Posterior cingulate gyrus (tissue), 11 donors: ENCODE measurements at regions of chr9 and their contacts with region 1.

Region 1: DNA sequence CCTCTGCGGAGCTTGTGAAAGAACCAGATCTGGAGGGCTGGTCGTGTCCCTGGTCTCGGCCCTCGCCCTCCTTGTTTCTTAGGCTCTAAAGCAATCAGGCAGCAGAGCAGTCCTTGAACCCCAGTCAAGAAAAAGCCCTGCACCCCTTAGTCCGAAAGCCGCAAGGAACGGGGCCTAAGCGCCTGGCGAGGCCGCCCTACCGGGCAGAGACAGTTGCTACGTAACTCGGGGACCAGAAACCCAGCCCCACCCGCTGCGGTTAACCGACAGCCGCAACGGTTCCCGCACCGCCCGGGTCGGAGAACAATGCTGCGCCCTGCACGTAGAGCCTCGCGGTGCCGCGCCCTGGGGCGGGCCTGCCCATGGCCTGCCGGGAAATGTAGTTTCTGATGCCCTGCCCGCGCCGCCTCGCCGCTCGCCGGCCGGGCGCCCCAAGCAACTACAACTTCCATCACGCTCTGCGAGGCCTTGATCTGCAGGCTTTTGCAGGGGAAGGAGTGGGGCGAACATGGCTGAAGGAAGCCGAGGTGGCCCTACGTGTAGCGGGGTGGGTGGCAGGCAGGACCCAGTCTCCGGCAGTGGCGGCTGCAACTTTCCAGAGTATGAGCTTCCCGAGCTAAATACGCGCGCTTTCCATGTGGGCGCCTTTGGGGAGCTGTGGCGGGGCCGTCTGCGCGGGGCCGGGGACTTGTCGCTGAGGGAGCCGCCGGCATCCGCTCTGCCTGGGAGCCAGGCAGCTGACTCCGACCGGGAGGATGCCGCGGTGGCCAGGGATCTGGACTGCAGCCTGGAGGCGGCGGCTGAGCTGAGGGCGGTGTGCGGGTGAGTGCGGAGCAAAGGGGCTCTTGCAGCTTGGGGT is at the start of gene SNAPC3:
- DNase-seq: peak; percentile 90 to 99 (median 96)

Region 2: GRCh38 chr9:15211160-15211814 is 211.3 kb before region 1 on chr9:
- intact Hi-C with region 1: loop called (anchors 5 kb)
- DNase-seq: peak in 6 of 10 donors; percentile 16 to 83 (median 48)

Region 3: DNA sequence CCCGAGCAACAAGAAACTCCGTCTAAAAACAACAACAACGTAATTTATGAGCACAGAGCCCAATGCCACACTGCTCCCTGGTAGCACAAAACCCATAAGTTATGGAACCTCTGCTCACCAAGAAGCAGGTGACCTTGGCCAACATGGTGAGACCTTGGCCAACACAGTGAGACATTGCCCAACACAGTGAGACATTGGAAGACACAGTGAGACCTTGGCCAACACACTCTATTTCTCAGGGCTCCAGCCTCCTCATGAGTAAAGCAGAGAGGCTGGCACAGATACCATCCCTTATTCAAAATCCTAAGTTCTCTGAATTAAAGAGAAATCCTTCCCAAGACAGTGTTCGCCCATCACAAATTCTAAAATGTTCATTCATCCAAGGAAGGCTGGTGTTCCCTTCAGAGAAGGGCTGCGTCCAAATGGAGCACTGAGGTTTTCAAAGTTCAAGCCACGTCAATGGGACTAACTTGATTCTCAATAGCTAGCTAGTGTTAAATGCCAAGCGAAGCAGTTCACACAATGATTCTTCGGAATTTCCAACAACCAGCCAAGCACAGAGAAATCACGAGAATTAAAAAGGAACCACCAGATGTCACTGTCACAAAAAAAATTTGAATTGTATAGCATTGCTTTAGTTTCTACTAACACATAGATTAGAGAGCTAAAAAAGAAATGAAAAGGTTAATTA is 145.1 kb before region 1 on chr9:
- intact Hi-C with region 1: loop called (anchors 5 kb)
- DNase-seq: no peak

Region 4: DNA sequence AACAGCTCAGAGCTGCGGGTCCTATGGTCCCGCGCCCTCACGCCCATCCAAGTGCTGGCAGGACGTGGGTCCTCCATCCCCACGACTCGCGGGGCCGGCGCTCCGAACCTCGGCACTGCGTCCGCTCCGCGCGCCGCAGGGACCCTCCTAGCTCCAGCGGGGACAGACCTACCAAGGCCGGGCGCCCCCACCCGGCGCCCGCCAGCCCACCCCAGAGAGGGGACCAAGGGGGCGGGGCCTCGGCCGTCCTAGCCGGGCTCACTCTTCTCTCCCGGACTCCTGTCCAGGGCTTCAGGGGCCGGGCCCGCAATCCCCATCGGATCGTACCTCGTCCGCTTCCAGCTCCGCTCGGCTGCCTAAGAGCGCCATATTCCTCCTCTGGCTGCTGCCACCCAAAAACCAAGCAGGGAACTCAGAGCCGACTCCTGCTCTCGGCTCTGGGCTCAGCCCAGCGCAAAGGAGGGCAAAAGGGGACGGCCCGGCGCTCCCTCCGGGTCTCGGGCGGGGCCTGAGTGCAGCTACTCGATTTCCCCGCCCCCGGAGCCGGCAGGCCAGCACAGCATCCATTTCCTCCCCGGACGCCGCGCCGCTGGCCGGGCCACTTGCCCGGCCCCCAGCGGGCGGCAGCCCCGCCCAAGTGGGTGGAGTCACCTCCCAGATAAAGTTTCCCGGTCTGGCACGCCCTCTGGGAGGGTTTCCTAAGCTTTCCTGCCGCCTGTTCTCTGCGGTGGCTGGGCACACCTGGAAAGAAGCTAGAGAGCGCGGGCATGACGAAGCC is 115.7 kb before region 1 on chr9 and contains the start of gene TTC39B:
- intact Hi-C with region 1: loop called (anchors 10 kb)
- DNase-seq: peak; percentile 64 to 98 (median 80)

Region 5: DNA sequence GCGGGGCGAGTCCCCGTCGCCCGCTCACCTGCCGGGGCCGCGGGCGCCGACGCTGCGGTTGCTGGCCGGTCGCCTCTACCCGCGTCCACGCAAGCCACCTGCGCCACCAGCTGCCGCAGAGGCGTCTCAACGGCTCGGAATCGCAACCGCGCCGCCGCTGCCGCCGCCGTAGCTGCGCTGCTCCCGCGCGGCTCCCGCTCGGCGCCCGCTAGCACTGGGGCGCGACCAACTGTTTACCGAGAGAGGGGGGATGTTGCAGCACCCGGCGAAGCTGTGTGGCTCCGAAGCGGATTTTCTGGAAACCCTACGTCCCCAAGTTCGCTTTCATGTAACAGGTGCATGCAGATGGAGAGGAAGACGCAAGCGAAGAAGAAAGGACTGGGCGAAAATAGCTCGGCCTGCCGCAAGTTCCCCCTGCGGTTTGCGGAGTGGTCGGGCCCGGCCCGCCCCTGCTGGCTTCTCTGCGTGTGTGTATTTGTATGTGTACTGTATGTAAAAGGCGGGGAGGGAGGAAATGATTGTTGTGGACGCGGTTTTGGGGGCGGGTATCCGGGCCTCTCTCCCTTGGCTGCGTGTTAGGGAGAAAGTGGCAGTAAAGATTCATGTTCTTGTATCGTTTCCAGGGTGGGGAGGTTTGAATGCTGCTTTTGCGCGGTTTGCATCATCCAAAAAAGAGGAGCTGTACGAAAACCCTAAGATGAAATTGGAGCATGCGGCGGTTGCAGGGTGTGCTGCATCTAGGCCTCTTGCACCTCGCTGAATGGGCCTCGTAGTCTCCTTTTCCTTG is 88.4 kb after region 1 on chr9 and contains the start of gene PSIP1:
- intact Hi-C with region 1: loop called (anchors 1 kb)
- DNase-seq: peak; percentile 64 to 96 (median 76)

Region 6: DNA sequence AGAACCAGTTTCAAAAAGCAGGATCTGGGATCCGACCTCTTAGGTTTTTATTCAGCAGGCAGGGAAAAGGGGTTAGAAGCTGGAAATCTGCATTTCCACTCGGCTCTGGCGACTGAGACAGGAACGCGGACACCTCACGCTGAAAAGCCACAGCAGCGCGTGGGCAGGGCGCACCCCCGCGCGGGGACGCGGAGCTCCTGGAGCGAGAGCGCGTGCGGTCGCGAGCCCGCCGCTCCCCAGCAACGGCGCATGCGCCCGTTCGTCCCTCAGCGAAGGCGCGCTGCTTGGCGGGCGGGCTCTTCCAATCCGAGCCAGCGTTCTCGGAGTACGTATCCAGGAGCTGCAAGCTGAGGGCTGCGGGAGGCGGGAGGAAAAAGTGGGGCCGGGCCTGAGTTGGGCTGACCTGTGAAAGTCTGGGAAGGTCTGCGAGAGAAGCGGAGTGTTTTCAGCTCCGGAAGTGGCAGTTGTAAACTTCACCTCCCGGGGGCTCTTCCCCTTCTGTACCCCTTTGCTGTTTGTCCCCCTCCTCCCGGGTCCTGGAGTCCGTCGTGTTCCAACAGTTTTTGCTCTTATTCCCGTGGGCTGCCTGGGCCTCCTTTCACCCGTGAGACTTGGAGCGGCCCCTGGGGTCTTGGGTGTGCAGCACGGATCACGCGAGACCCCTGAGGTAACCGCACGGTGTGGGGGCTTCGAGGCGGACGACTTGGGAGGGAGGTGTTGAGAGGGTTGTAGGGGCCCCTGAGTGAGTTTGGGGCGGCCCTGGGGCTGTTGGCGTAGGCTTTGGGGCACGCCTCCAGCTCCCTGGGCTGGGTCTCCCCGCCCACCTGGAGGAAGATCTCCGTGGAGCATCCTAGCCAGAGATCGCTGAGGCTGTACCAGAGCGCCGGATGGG is 130.3 kb after region 1 on chr9 and contains the start of gene CCDC171:
- intact Hi-C with region 1: loop called (anchors 2 kb)
- DNase-seq: peak; percentile 81 to 99 (median 90)